Dorsolateral prefrontal cortex (tissue), 120 donors: ENCODE measurements at regions of chr12 and their contacts with region 1.

Region 1: GRCh38 chr12:100200463-100201181 is at the start of gene ACTR6:
- DNase-seq: peak; percentile 85 to 95 (median 92)
- H3K4me3 ChIP-seq: peak within 1 kb of the TSS; percentile 46 to 96 (median 85)
- H3K27ac ChIP-seq: peak within 1 kb of the TSS in 45 of 59 donors; percentile 7 to 89 (median 64)
- H3K27me3 ChIP-seq: no peaks in the 10 kb centered on the region
- CTCF ChIP-seq: peak in 35 of 56 donors; percentile 6 to 50 (median 30)
- total RNA-seq, gene ACTR6: 26.5 to 71.6 (median 48.8) TPM

Region 2: DNA sequence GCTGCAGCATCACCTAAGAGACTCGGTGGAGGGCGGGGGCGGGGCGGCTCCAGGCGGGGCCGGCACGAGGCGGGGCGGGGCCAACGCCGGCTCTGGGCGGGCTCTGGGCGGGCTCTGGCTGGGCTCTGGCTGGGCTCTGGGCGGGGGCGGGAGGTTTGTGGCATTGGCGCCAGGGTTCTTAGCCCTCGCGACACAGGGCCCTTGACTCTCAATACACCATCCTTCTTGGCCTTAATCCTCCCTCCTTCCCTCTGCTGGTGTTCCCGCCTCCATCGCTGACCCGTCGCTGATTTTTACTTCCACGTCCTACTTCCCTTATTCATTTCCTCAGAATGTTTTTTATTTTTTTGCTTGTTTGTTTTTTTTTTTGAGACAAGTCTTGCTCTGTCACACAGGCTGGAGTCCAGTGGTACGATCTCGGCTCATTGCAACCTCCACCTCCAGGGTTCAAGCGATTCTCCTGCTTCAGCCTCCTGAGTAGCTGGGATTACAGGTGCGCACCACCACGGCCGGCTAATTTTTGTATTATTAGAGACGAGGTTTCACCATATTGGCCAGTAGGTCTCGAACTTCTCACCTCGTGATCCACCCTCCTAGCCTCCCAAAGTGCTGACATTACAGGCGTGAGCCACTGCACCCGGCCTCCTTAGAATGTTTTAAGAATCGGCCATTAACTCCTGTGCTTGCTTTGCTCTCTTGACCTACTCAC is 57.6 kb before region 1 on chr12 and contains the start of gene BLTP3B:
- intact Hi-C with region 1: loop called (anchors 1 to 5 kb)
- DNase-seq: peak; percentile 85 to 95 (median 90)
- H3K4me3 ChIP-seq: peak within 1 kb of the TSS; percentile 72 to 99 (median 93)
- H3K27ac ChIP-seq: peak within 1 kb of the TSS; percentile 85 to 100 (median 98)
- H3K27me3 ChIP-seq: no peaks in the 10 kb centered on the region
- CTCF ChIP-seq: peak in 3 of 56 donors; percentile 4 to 10 (median 9)
- total RNA-seq, gene BLTP3B: 39.2 to 87.7 (median 60.5) TPM